Common myeloid progenitor, CD34-positive (primary cell): ENCODE measurements at regions of chr15 and their contacts with region 1.

Region 1: DNA sequence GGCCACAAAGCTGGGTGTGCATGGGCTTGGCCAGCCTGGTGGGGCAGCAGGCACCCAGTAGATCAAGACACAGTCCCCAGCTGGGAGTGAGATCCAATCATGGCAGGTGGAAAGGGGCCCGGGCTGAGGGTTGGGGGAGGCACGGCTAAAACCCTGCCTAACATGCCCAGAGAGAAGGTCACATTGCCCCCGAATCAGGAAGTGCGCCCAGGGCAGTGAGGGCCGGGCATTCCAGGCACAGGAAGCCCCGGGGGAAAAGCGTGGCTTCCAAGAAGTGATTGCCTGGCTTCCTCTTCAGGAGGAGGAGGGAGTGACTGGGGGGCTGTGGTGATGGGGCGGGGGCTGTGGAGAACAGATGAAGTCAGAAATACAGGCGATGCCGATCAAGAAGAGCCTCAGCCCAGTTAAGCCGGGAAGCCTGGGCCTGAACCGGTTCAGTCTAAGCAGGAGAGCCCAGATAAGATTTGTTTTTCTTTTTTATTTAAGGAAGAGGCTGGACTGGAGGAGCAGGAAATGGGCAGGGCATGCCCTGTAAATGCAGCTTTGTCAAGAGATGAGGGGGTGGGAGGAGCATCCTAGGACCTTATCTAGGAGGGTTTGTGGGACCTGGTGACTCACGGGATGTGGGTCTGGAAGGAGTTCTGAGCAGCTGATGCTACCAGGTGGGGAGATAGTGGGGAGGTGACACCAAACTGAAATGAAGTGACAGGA is 83.9 kb downstream of the CHSY1 start:
- DNase-seq: peak; percentile 88 to 96 (median 96)
- H3K4me3 ChIP-seq: peak overlapping the region in 6 of 7 experiments; percentile 20 to 60 (median 51)
- H3K27ac ChIP-seq: peak overlapping the region; percentile 46 to 68
- H3K4me1 ChIP-seq: peaks cover 14 to 54% (median 48%) of the 10 kb centered on the region in 4 experiments
- H3K27me3 ChIP-seq: no peaks in the 10 kb centered on the region

Region 2: DNA sequence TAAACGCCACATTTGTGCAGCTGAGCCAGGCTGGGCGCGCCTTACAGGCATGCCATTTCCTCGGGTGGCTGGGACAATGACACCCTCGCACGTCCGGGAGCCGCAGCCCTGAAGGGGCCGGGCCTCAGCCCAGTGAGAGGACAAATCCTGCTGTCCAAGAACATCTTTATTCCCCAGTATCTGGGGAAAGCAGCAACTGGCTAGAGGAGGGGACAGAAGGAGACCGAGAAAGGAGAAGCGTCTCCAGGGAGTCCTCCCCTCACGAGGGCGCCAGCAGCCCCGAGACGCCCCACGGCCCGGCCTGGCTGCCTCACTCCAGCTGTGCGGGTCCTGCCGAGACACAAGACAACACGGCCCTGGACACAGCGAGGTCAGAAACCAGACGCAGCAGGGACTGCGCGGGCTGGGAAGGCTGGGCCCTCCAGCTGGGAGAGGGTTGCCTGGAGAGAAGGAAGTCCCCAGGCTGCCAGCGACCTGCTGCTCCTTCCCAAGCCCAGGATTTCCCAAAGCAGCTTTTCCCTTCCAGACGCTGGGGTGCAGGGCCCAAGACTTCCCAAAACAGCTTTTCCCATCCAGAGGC is 46.3 kb before region 1 on chr15:
- CTCF ChIA-PET with region 1: interaction called, 13 read pairs
- POLR2A ChIA-PET with region 1: interaction called, 5 read pairs
- DNase-seq: peak; percentile 51 to 75 (median 64)
- H3K4me3 ChIP-seq: peak overlapping the region in 5 of 7 experiments; percentile 55 to 81 (median 62)
- H3K27ac ChIP-seq: peak overlapping the region; percentile 49 to 77
- H3K4me1 ChIP-seq: peaks cover 19 to 68% (median 58%) of the 10 kb centered on the region in 4 experiments
- H3K27me3 ChIP-seq: no peaks in the 10 kb centered on the region

Region 3: DNA sequence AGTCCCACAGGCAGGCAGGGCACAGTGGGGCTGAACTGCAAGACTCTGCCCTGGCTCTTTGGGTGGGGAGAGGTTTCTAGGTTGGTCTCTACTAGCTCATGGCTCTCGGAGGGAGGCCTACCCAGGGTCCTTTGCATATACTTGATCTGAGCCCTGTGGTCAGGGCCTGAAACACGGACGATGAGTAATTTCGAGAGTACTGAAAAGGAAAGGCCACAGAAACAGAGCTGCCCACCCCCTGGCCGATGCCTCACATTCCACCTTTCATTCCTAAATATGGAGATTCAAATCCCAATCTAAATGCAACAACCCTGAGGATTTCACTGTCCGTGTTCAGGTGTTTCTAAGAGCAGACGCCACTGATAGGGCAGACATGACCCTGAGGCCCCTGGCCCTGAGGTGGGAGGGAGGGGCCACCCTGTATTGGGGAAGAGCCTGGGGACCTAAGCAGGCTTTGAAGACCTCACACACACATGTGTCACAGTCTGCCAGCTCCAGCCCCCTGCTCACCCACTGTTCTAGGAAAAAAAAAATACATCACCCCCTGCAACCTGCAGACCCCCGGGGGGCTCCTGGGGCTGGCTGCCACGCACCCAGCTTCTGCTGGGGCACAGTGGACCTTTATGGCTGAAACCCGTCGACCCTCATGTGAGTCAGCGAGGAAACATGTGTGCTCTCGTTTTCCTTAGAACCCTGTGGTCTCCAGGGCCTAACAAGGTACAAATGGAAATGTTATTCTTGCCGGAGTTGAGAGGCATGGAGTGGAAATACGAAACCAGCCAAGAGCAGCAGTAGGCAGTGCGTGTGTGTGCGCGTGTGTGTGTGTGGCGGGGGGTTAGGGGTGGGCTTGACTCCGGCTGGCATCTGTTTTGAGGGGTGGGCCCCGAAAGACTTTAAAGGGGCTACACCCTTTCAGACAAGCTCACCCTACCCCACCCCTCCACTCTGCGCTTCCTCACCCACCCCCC is 28.7 kb before region 1 on chr15:
- CTCF ChIA-PET with region 1: interaction called, 15 read pairs
- POLR2A ChIA-PET with region 1: interaction called, 4 read pairs
- DNase-seq: peak in 2 of 3 donors; percentile 53 to 62
- H3K4me3 ChIP-seq: no peak overlapping the region
- H3K27ac ChIP-seq: no peak overlapping the region
- H3K4me1 ChIP-seq: peaks cover 0 to 60% (median 47%) of the 10 kb centered on the region in 4 experiments
- H3K27me3 ChIP-seq: no peaks in the 10 kb centered on the region

Region 4: GRCh38 chr15:101148166-101148880 is 19.6 kb before region 1 on chr15:
- CTCF ChIA-PET with region 1: interaction called, 26 read pairs
- POLR2A ChIA-PET with region 1: interaction called, 12 read pairs
- DNase-seq: peak in 1 of 3 donors; percentile 49
- H3K4me3 ChIP-seq: no peak overlapping the region
- H3K27ac ChIP-seq: peak overlapping the region in 1 of 2 experiments; percentile 72
- H3K4me1 ChIP-seq: peaks cover 5 to 47% (median 40%) of the 10 kb centered on the region in 4 experiments
- H3K27me3 ChIP-seq: no peaks in the 10 kb centered on the region

Region 5: DNA sequence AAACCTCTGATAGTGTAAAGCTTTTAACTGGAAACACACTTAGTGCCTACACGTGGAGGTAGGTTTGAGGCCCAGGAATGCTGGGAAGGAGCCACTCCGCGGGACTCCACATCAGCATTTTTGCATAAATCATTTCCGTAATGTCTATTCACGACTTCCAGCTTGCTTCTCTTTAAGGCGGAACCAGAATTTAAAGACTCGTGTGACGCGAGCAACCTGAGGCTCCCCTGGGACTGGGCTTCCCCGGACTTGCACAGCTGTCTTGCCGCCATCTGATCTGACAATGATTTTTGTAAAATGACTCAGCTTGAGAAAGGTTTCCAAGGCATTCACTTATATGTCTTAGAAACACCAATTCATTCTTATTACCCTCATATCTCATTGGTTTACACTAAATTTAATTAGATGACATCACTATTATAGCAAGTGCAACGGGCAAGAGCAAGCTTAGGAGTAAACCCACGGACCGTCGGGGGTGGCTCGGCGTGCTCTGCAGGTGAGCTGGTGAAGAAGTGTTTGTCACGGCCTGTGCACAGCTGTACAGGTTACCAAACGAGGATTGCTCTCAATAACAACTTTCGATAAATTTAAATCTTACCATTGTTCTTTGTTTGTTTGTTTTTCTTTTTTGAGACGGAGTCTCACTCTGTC is 11.3 kb before region 1 on chr15:
- CTCF ChIA-PET with region 1: interaction called, 26 read pairs
- POLR2A ChIA-PET with region 1: no interaction called
- DNase-seq: no peak
- H3K4me3 ChIP-seq: no peak overlapping the region
- H3K27ac ChIP-seq: no peak overlapping the region
- H3K4me1 ChIP-seq: peaks cover 0 to 29% (median 26%) of the 10 kb centered on the region in 4 experiments
- H3K27me3 ChIP-seq: no peaks in the 10 kb centered on the region

Region 6: GRCh38 chr15:101179341-101180153 is 11.6 kb after region 1 on chr15:
- CTCF ChIA-PET with region 1: interaction called, 13 read pairs
- POLR2A ChIA-PET with region 1: no interaction called
- DNase-seq: no peak
- H3K4me3 ChIP-seq: no peak overlapping the region
- H3K27ac ChIP-seq: no peak overlapping the region
- H3K4me1 ChIP-seq: peaks cover 9 to 25% (median 23%) of the 10 kb centered on the region in 4 experiments
- H3K27me3 ChIP-seq: no peaks in the 10 kb centered on the region

Region 7: GRCh38 chr15:101191242-101191641 is 23.3 kb after region 1 on chr15:
- CTCF ChIA-PET with region 1: no interaction called
- POLR2A ChIA-PET with region 1: no interaction called
- DNase-seq: no peak
- H3K4me3 ChIP-seq: no peak overlapping the region
- H3K27ac ChIP-seq: no peak overlapping the region
- H3K4me1 ChIP-seq: peaks cover 13 to 29% (median 25%) of the 10 kb centered on the region in 4 experiments
- H3K27me3 ChIP-seq: no peaks in the 10 kb centered on the region

Region 8: GRCh38 chr15:101215681-101216080 is 47.8 kb after region 1 on chr15:
- CTCF ChIA-PET with region 1: no interaction called
- POLR2A ChIA-PET with region 1: no interaction called
- DNase-seq: no peak
- H3K4me3 ChIP-seq: no peak overlapping the region
- H3K27ac ChIP-seq: no peak overlapping the region
- H3K4me1 ChIP-seq: peaks cover 0 to 9% (median 6%) of the 10 kb centered on the region in 4 experiments
- H3K27me3 ChIP-seq: no peaks in the 10 kb centered on the region